ENCODE measurements at regions of chr2 and their contacts with region 1.

Region 1: GRCh38 chr2:9712263-9712662 is 81.5 kb upstream of the YWHAQ start:
- DNase-seq: no peak
- H3K4me3 ChIP-seq: no peak overlapping the region
- CTCF ChIP-seq: no peak

Region 2: DNA sequence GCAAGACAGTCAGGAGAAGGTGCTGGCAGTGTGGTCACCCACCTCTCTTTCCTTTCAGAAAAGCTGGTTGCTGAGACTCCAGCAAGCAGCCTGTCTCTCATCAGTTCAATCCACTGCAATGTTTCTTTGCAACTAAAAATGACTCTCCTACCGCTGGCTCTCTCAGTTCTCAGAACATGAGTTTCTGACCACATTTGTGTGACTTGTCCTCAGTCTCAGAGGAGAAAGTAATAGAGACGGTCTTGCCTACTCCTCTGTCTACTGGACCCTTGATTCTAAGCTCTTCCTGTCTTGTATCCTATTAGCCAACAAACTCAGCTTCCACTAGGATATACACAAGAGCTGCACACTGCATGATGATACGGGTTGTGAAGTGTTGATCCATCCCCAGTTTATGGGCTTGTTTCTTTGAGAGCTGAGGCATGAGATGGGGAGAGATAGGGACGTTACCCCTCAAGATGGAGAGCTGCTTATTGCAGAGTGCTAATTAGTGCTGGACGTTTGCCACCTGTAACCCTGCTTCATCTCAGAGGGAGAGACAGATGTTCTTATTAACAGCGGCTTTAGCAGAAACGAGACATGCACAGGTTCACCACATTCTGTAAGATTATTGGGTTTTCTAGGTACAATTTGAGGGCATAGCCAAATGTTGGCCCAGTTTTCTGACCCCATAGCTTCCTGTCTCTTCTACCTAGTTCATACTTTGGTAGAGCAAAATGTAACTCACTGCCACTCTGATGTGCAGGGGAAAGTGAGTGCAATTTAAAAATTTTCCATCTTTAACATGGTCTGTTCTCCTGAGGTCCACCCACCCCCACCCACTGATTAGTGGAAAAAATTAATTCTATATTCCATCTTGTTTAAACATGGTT is 49.0 kb before region 1 on chr2:
- in situ Hi-C with region 1: loop called (anchors 5 kb)
- DNase-seq: no peak
- H3K4me3 ChIP-seq: no peak overlapping the region
- CTCF ChIP-seq: no peak

Region 3: GRCh38 chr2:9805435-9806326 is 93.4 kb after region 1 on chr2:
- in situ Hi-C with region 1: no loop called
- DNase-seq: no peak
- H3K4me3 ChIP-seq: no peak overlapping the region
- CTCF ChIP-seq: no peak

Measured in astrocyte of the cerebellum (primary cell).